ENCODE measurements at regions of chr2 and their contacts with region 1.

Region 1: DNA sequence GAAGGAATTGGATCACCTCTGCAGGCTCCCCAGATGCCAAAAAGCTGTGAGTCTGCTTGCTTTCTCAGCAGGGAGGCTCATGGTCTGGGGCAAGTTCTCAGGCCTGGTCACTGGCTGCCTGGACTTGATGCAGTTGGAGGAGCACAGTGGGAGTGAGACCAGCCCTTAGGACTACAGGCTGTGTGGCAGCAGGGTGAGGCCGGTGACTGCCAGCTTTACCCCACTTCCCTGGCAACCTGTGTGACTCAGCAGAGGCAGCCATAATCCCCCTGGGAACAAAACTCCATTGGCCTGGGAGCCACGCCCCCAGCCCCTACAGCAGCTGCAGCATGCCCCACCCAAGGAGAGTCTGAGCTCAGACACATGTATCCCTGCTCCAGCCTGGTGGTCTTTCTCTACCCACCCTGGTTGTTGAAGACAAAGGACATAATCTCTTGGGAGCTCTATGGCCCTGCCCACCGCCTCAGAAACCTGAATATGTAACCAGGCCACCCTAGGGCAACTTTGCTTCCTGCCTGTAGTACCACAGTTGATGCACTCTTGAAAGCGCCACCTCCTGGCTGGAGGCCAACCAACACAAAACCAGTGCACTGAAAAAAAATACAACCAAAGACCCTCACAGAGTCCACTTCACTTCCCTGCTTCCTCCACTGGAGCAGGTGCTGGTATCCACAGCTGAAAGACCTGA is 106.8 kb upstream of the SPATS2L start:
- DNase-seq: peak in 1 of 2 experiments; percentile 68
- H3K4me3 ChIP-seq: no peak overlapping the region
- H3K27ac ChIP-seq: peak overlapping the region; percentile 52; the same call in 1 of the 2 replicates
- H3K4me1 ChIP-seq: peaks cover 5 to 22% (median 10%) of the 10 kb centered on the region in 4 experiments
- H3K27me3 ChIP-seq: no peaks in the 10 kb centered on the region
- CTCF ChIP-seq: peak; percentile 40 to 58 (median 48)
- EP300 ChIP-seq: no peak
- POLR2A ChIP-seq: no peak; a peak in 1 of 3 replicates
- RAD21 ChIP-seq: peak; percentile 41 to 62

Region 2: DNA sequence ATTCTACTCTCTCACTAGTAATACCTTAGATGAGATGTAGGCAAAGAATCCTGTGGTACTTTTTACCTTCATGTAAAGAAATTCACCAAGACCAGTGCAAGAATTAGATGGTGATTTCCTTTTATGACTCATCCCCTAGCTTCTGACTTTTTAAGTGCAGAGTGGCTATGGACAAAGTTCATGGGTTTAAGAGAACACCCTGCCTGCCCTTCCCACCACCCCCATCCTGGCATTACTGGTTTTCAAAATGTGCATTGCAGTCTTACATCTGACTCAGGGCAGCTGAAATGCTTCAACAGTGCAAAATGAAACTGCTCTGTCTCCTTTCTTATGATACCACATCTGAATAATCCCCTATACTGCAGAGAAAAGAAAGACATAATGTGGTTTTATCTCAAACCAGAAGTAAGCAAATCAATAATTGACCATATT is 221.7 kb before region 1 on chr2:
- CTCF ChIA-PET with region 1: no interaction called
- POLR2A ChIA-PET with region 1: no interaction called
- DNase-seq: no peak
- H3K4me3 ChIP-seq: no peak overlapping the region
- H3K27ac ChIP-seq: no peak overlapping the region
- H3K4me1 ChIP-seq: peaks cover 2 to 6% (median 4%) of the 10 kb centered on the region in 4 experiments; a peak in 6 of 7 replicates
- H3K27me3 ChIP-seq: no peaks in the 10 kb centered on the region
- CTCF ChIP-seq: no peak
- EP300 ChIP-seq: no peak
- POLR2A ChIP-seq: no peak
- RAD21 ChIP-seq: no peak

Region 3: GRCh38 chr2:200174433-200175168 is 25.1 kb before region 1 on chr2:
- CTCF ChIA-PET with region 1: interaction called, 11 read pairs
- POLR2A ChIA-PET with region 1: interaction called, 3 read pairs
- DNase-seq: no peak
- H3K4me3 ChIP-seq: no peak overlapping the region
- H3K27ac ChIP-seq: no peak overlapping the region
- H3K4me1 ChIP-seq: peaks cover 0 to 2% (median under 1%) of the 10 kb centered on the region in 4 experiments; a peak in 1 of 7 replicates
- H3K27me3 ChIP-seq: no peaks in the 10 kb centered on the region
- CTCF ChIP-seq: no peak
- EP300 ChIP-seq: no peak
- POLR2A ChIP-seq: no peak
- RAD21 ChIP-seq: no peak

Region 4: GRCh38 chr2:200181755-200182154 is 18.0 kb before region 1 on chr2:
- CTCF ChIA-PET with region 1: interaction called, 25 read pairs
- POLR2A ChIA-PET with region 1: interaction called, 3 read pairs
- DNase-seq: no peak
- H3K4me3 ChIP-seq: no peak overlapping the region
- H3K27ac ChIP-seq: no peak overlapping the region
- H3K4me1 ChIP-seq: peaks cover 0 to 6% (median 0%) of the 10 kb centered on the region in 4 experiments; a peak in 1 of 7 replicates
- H3K27me3 ChIP-seq: no peaks in the 10 kb centered on the region; a peak in 1 of 7 replicates
- CTCF ChIP-seq: no peak
- EP300 ChIP-seq: no peak
- POLR2A ChIP-seq: no peak
- RAD21 ChIP-seq: no peak